H1 (cell line): ENCODE measurements at regions of chr7 and their contacts with region 1.

Region 1: DNA sequence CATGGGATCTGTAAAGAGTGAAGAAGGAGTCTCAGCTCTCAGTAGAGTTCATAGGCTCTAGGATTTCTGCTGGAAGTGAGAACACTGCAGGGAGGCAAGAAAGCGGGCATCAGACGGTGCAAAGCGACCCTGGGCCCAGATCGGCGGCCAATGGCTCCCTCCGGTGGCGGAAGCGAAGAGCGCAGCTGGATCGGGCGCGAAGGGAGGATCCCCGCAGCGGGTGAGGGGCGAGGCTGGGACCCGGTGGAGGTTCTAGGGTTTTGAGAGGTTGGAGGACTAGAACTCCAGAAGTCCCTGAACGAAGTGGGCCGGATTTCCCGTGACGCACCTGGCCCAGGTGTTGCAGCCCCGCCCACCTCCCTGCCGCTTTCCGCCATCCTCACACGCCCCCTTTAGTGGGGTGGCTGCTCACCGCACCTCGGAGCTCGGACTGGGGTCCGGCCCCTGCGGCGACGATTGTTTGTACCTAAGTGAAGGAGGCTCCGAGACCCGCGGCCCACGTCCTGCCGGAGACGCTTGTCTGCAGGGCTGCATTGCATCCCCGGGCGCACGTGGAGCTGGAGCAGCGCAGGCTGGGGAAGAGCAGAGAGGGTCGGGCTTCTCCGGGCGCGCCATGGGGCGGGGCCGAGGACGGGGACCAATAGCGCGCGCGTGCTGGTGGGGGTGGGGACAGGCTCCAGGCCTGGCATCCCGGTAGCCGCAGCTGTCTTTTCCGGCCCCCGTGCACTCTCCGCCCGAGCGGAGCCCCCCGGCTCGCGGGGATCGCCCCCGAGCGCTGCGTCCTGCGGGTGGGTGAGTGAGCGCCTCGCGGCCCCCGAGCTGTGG is at the start of gene SLC12A9:
- DNase-seq: peak in 1 of 2 experiments; percentile 99
- H3K4me3 ChIP-seq: peak within 1 kb of the TSS; percentile 50 to 95 (median 75)
- H3K27ac ChIP-seq: peak within 1 kb of the TSS; percentile 17; the same call in 1 of the 2 replicates
- H3K4me1 ChIP-seq: peaks cover 0 to 6% (median 0%) of the 10 kb centered on the region in 4 experiments; a peak in 1 of 7 replicates
- H3K27me3 ChIP-seq: no peaks in the 10 kb centered on the region
- CTCF ChIP-seq: peak in 2 of 3 experiments; percentile 91 to 92; a peak in 3 of 4 replicates
- EP300 ChIP-seq: no peak
- POLR2A ChIP-seq: peak in 1 of 2 experiments; percentile 15; a peak in 1 of 3 replicates
- RAD21 ChIP-seq: peak; percentile 98
- total RNA-seq, gene SLC12A9: 40.1 and 40.7 TPM in 2 replicates

Region 2: DNA sequence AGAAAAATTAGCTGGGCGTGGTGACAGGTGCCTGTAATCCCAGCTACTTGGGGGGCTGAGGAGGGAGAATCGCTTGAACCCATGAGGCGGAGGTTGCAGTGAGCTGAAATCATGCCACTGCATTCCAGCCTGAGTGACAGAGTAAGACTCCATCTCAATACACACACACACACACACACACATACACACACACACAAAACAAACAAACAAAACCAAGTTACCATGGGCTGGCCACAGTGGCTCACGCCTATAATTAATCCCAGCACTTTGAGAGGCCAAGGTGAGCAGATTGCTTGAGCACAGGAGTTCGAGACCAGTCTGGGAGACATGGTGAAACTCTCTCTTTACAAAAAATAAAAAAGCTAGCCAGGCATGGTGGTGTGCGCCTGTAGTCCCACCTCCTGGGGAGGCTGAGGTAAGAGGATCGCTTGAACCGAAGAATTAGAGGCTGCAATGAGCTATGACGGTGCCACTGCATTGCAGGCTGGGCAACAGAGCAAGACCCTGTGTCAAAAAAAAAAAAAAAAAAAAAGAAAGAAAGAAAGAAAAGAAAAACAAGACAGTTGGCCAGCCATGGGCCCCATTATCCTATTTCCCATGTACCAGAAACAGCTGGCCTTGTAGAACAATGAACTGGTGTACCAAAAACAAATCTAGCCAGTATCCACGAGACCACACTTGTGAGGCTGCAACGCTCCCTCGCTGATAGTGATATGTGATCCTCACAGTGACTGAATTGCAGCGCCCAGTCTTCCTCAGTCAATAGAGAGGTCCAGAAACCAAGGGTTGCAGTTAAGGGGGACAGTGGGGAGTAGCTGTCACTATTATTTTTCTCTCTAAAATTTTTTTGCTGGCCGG is 319.9 kb before region 1 on chr7:
- CTCF ChIA-PET with region 1: no interaction called
- POLR2A ChIA-PET with region 1: no interaction called
- DNase-seq: no peak
- H3K4me3 ChIP-seq: no peak overlapping the region
- H3K27ac ChIP-seq: no peak overlapping the region
- H3K4me1 ChIP-seq: no peaks in the 10 kb centered on the region
- H3K27me3 ChIP-seq: no peaks in the 10 kb centered on the region
- CTCF ChIP-seq: no peak
- EP300 ChIP-seq: no peak
- POLR2A ChIP-seq: no peak
- RAD21 ChIP-seq: no peak

Region 3: DNA sequence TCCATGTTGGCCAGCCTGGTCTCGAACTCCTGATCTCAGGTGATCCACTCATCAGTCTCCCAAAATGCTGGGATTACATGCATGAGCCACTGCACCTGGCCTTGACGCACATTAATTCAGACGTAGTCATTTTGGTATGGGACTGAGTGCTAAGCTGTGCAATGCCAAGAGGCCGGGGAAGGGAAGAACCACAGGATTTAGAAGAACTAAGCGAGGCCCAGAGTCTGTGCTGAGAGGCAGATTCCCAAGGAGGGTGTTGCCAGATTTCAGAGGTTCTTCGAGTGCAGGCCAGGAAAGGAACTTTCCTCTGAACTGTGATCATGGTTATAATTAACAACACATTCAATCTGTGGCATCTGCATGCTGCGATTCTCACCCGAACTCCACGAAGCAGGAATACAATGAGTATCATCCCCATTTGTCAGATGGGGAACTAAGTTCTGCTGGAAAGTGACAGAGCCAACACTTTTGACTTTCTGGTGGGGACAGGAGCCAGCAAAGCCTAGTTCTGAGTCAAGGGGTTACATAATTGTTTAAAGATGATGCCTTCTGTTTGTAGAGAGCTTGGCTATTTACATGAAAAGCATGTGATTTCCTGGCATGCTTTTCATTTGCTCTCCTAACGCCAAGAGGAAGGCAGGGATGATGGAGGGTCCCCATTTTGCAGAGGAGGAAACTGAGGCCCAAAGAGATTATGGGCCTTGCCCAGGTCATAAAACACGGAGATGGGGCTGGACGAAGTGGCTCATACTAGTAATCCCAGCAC is 125.1 kb before region 1 on chr7:
- CTCF ChIA-PET with region 1: interaction called, 21 read pairs
- POLR2A ChIA-PET with region 1: no interaction called
- DNase-seq: no peak
- H3K4me3 ChIP-seq: no peak overlapping the region
- H3K27ac ChIP-seq: no peak overlapping the region
- H3K4me1 ChIP-seq: no peaks in the 10 kb centered on the region
- H3K27me3 ChIP-seq: no peaks in the 10 kb centered on the region; a peak in 3 of 7 replicates
- CTCF ChIP-seq: no peak
- EP300 ChIP-seq: no peak
- POLR2A ChIP-seq: no peak
- RAD21 ChIP-seq: no peak

Region 4: DNA sequence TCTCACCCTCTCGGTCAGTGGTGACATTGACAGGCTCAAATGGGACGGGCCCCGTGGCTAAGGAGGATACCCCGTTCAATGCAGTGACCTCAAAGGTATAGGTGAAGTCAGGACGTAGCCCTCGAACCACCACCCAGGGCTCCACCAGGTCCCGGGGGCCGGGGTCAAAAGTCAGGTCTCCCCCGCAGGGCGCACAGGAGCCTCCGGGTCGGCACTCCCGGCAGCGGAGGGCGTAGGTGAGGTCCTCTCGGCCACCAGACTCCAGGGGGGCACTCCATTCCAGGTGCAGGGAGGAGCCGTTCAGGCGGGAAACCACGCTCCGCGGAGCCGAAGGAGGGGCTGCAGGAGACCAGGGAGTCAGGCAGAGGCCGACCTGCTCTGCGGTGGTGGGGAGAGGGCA is 32.7 kb before region 1 on chr7:
- CTCF ChIA-PET with region 1: interaction called, 48 read pairs
- POLR2A ChIA-PET with region 1: interaction called, 52 read pairs
- DNase-seq: no peak
- H3K4me3 ChIP-seq: no peak overlapping the region
- H3K27ac ChIP-seq: no peak overlapping the region
- H3K4me1 ChIP-seq: peaks cover 0 to 3% (median under 1%) of the 10 kb centered on the region in 4 experiments; a peak in 1 of 7 replicates
- H3K27me3 ChIP-seq: no peaks in the 10 kb centered on the region
- CTCF ChIP-seq: no peak
- EP300 ChIP-seq: no peak
- POLR2A ChIP-seq: no peak
- RAD21 ChIP-seq: no peak

Region 5: DNA sequence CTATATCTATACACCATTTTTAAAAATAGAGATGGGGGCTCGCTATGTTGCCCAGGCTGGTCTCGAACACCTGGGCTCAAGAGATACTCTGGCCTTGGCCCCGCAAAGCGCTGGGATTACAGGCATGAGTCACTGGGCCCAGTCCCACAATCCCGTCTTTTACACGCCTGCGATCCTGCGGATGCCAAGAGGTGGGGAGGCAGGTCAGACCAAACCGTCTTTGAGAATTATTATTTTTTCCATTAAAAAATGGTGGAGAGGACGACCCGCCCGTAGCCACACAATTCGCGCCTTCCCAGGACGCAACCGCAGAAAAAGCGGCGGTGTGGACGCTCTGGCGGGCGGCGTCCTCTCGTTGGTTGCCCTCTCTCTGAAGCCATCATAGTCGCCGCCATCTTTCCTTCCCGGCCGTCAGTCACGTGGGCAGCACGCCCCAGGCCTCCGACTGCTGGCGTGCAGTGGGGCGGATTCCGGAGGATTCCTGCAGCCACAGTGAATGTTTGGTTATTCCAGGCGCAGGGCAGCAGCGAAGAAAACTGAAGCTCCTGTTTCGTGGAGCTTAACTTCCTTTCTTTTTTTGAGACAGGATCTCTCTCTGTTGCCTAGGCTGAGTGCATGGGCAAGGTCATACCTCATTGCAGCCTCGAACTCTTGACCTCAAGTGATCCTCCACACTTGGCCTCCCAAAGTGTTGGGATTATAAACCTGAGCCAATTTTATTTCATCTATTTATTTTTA is 15.0 kb before region 1 on chr7:
- CTCF ChIA-PET with region 1: interaction called, 55 read pairs
- POLR2A ChIA-PET with region 1: interaction called, 37 read pairs
- DNase-seq: peak; percentile 83 to 88
- H3K4me3 ChIP-seq: peak overlapping the region; percentile 29 to 67 (median 56)
- H3K27ac ChIP-seq: peak overlapping the region; percentile 94
- H3K4me1 ChIP-seq: peaks cover 3 to 10% (median 8%) of the 10 kb centered on the region in 4 experiments
- H3K27me3 ChIP-seq: no peaks in the 10 kb centered on the region
- CTCF ChIP-seq: no peak
- EP300 ChIP-seq: no peak
- POLR2A ChIP-seq: no peak; a peak in 1 of 3 replicates
- RAD21 ChIP-seq: no peak

Region 6: GRCh38 chr7:100874577-100875355 is 22.5 kb after region 1 on chr7 and contains the start of gene SRRT:
- CTCF ChIA-PET with region 1: interaction called, 5 read pairs
- POLR2A ChIA-PET with region 1: interaction called, 12 read pairs
- DNase-seq: peak; percentile 95 to 97
- H3K4me3 ChIP-seq: peak within 1 kb of the TSS; percentile 81 to 93 (median 91)
- H3K27ac ChIP-seq: peak within 1 kb of the TSS; percentile 93
- H3K4me1 ChIP-seq: peaks cover 0 to 9% (median 1%) of the 10 kb centered on the region in 4 experiments; a peak in 3 of 7 replicates
- H3K27me3 ChIP-seq: no peaks in the 10 kb centered on the region
- CTCF ChIP-seq: peak in 1 of 3 experiments; percentile 19; a peak in 1 of 4 replicates
- EP300 ChIP-seq: no peak; a peak in 1 of 3 replicates
- POLR2A ChIP-seq: peak in 1 of 2 experiments; percentile 98; a peak in 2 of 3 replicates
- RAD21 ChIP-seq: no peak
- total RNA-seq, gene SRRT: 237 and 239 TPM in 2 replicates